ENCODE measurements at regions of chr14 and their contacts with region 1.

Region 1: GRCh38 chr14:74612350-74613021 is 449 bp upstream of the LTBP2 start:
- DNase-seq: peak; percentile 72
- H3K4me3 Mint-ChIP-seq: peak overlapping the region; percentile 69
- H3K27ac Mint-ChIP-seq: no peak overlapping the region
- H3K4me1 Mint-ChIP-seq: peaks cover 45% of the 10 kb centered on the region
- H3K27me3 Mint-ChIP-seq: no peaks in the 10 kb centered on the region
- CTCF ChIP-seq: peak; percentile 58

Region 2: DNA sequence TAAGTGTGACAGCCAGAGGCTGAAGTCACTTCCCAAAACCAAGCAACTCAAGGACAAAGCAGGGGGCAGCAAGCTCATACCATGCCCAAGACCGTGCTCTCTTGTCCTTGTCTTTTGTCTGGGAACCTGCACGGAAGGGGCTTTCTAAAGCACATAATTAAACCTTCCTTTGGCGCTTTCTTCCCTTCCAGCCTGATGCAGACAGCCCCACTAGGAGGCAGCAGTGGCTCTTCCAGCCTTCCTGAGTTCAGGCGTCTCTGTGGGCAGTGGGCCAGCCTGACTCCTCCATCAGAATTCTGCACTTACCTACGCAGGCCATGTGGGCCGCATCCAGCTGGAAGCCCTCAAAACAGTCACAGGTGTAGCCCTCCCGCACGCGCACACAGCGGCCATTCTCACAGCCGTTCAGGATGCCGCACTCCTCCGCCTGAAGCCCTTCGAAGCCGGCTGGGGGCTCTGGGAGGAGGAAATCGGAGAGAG is 111.3 kb before region 1 on chr14:
- CTCF ChIA-PET with region 1: interaction called, 6 read pairs
- POLR2A ChIA-PET with region 1: interaction called, 4 read pairs
- intact Hi-C with region 1: loop called (anchors 2 kb)
- DNase-seq: peak; percentile 63
- H3K4me3 Mint-ChIP-seq: no peak overlapping the region
- H3K27ac Mint-ChIP-seq: no peak overlapping the region
- H3K4me1 Mint-ChIP-seq: peaks cover 14% of the 10 kb centered on the region
- H3K27me3 Mint-ChIP-seq: no peaks in the 10 kb centered on the region
- CTCF ChIP-seq: peak; percentile 53

Region 3: GRCh38 chr14:74571901-74572725 is 40.4 kb before region 1 on chr14:
- CTCF ChIA-PET with region 1: interaction called, 23 read pairs
- POLR2A ChIA-PET with region 1: interaction called, 40 read pairs
- intact Hi-C with region 1: loop called (anchors 2 kb)
- DNase-seq: peak; percentile 97
- H3K4me3 Mint-ChIP-seq: peak overlapping the region; percentile 67
- H3K27ac Mint-ChIP-seq: peak overlapping the region; percentile 92
- H3K4me1 Mint-ChIP-seq: peaks cover 69% of the 10 kb centered on the region
- H3K27me3 Mint-ChIP-seq: no peaks in the 10 kb centered on the region
- CTCF ChIP-seq: no peak

Region 4: GRCh38 chr14:74589291-74589879 is 23.1 kb before region 1 on chr14:
- CTCF ChIA-PET with region 1: interaction called, 11 read pairs
- POLR2A ChIA-PET with region 1: interaction called, 3 read pairs
- intact Hi-C with region 1: no loop called
- DNase-seq: no peak
- H3K4me3 Mint-ChIP-seq: no peak overlapping the region
- H3K27ac Mint-ChIP-seq: no peak overlapping the region
- H3K4me1 Mint-ChIP-seq: peaks cover 7% of the 10 kb centered on the region
- H3K27me3 Mint-ChIP-seq: no peaks in the 10 kb centered on the region
- CTCF ChIP-seq: no peak

Region 5: DNA sequence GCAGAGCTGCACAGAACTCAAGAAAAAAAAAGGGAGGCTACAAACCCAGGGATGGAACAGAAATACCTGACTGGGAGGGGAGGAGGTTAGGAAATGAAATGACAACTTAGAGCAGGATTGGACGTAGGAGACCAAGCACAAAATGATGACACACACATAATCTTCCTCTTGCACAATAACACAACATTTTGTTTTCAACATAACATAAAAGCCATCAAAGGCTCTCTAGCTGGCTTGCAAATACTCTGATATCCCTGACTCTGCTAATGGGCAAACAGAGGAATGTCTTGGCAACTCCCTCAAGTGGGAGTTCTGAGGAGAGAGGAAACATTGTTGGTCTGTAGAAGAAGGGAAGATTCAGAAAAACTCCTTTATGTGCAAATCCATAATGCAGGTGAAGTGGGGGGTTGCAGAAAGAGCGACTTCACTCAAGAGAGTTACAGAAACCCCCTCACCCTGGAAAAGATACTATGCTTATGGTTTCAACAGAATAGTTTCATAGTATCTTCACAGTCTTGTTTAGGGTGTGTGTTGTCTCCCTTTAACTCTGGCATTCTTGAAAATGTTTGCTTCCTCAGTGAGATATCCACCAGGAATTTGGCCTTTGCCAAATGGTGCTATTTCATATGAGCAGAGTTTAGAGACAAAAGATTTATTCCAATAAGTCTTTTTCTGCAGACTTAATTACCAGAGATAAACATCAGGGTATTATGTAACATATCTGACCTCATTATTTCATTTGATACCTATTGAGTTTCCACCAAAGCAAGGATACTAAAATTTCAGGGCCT is 43.3 kb after region 1 on chr14:
- CTCF ChIA-PET with region 1: interaction called, 13 read pairs
- POLR2A ChIA-PET with region 1: interaction called, 3 read pairs
- intact Hi-C with region 1: no loop called
- DNase-seq: peak; percentile 83
- H3K4me3 Mint-ChIP-seq: no peak overlapping the region
- H3K27ac Mint-ChIP-seq: peak overlapping the region; percentile 75
- H3K4me1 Mint-ChIP-seq: peaks cover 25% of the 10 kb centered on the region
- H3K27me3 Mint-ChIP-seq: no peaks in the 10 kb centered on the region
- CTCF ChIP-seq: no peak

Region 6: GRCh38 chr14:74712499-74713394 is 100.3 kb after region 1 on chr14 and contains the starts of genes AREL1 and FCF1:
- CTCF ChIA-PET with region 1: interaction called, 8 read pairs
- POLR2A ChIA-PET with region 1: interaction called, 5 read pairs
- intact Hi-C with region 1: loop called (anchors 1 kb)
- DNase-seq: peak; percentile 89
- H3K4me3 Mint-ChIP-seq: peak within 1 kb of the TSS; percentile 99
- H3K27ac Mint-ChIP-seq: peak within 1 kb of the TSS; percentile 99
- H3K4me1 Mint-ChIP-seq: peaks cover 13% of the 10 kb centered on the region
- H3K27me3 Mint-ChIP-seq: no peaks in the 10 kb centered on the region
- CTCF ChIP-seq: no peak
- total RNA-seq, gene AREL1: 27.7 and 29.8 TPM in 2 replicates
- total RNA-seq, gene FCF1: 61.5 and 62.3 TPM in 2 replicates

Region 7: DNA sequence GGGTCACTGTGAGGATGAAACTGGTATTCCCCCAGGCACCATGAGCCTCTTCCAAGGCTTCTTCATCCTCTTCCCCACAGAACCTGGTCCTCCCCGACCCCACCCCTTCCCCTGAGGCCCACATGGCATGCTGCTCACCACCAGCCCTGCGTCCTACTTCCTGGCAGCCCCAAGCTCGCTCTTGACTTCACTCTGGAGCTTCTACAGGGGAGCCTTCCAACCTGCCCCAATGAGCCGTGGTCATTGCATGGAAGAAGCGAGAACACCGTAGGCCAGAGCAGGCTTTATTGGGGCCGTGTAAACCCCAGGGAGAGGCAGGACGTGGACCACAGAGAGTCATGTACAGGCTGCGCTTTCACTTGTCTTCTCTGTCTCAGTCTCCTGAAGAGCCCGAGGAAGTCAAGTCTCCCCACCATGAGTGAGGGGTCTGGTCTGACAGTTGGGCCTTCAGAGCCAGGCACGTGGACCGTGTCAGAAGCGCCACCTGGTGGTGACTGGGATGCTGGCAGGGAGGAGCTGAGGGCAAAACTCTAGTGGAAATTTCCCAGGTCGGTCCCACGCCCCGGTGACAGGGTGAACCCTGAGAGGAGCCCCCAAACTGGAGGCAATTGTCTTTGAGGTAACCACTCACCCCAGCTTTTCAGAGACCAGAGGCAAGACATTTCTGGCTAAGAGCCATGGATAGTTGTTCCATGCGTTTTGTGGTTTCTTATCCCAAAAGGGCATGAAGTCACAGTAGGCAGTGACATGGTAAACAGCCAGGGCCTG is 293.1 kb after region 1 on chr14:
- CTCF ChIA-PET with region 1: interaction called, 7 read pairs
- POLR2A ChIA-PET with region 1: interaction called, 3 read pairs
- intact Hi-C with region 1: loop called (anchors 1 kb)
- DNase-seq: peak; percentile 59
- H3K4me3 Mint-ChIP-seq: no peak overlapping the region
- H3K27ac Mint-ChIP-seq: no peak overlapping the region
- H3K4me1 Mint-ChIP-seq: no peaks in the 10 kb centered on the region
- H3K27me3 Mint-ChIP-seq: no peaks in the 10 kb centered on the region
- CTCF ChIP-seq: peak; percentile 83

Region 8: DNA sequence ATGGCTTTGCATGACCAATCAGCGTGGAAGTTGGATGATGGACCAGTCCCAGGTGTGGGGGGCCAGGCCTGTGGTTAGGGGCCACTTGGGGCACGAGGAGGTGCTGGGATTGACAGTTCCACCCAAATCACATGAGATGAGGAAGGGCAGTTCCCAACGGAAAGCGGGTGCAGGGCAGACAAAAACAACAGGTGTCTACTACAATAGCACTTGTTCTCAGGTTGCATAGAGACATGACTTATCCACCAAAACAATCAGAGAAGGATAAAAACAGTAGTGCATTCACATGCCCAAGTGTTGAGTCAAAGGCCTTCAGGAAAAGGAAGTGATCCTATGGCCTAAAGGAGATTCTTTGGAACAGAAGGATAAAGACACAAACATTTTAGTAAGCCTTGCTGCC is 375.6 kb after region 1 on chr14:
- CTCF ChIA-PET with region 1: no interaction called
- POLR2A ChIA-PET with region 1: no interaction called
- intact Hi-C with region 1: no loop called
- DNase-seq: peak; percentile 70
- H3K4me3 Mint-ChIP-seq: no peak overlapping the region
- H3K27ac Mint-ChIP-seq: peak overlapping the region; percentile 1
- H3K4me1 Mint-ChIP-seq: peaks cover 9% of the 10 kb centered on the region
- H3K27me3 Mint-ChIP-seq: no peaks in the 10 kb centered on the region
- CTCF ChIP-seq: no peak

Measured in MCF 10A (cell line).